ENCODE measurements at regions of chr10 and their contacts with region 1.

Region 1: DNA sequence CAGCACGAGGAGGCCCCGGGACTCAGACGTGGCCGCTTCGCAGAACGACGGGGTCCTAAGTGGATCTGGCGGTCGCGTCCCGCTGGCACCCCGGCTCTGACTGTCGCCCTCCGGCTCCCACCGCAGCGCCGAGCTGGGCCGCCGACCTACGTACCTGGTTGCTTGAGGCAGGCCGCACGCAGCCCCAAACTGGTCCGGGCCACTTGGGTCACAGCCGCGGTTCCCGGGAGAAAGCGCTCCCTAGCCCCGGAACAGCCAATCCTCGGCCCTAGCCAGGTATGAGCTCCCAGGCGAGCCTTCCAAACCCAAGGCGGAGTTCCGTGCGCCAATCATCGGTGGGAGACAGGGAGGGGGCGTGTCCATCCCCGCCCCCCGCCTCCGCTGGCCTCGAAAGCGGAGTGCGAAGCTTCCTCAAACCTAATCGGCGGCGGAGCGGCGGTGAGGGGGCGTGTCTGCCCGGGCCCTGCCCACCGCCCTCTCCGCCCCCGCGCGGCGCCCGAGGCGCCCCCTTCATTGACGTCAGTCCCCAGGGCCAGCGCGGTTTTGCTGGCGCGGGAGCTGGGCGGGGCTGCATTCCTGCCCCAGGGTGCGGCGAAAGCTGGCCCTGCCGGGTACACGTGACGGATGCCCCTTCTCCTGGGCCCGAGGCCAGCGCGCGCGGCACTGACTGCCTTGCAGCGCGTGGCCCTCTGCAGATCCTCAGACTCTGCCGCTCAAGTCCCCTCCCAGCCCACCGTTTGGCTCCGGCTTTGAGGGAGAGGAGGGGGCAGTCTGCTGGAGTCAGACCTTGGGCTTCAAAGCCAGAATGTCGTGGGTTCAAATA is at the start of gene AVPI1:
- DNase-seq: peak; percentile 98
- H3K4me3 Mint-ChIP-seq: peak within 1 kb of the TSS; percentile 82
- H3K27ac Mint-ChIP-seq: peak within 1 kb of the TSS; percentile 72
- H3K4me1 Mint-ChIP-seq: peaks cover 14% of the 10 kb centered on the region
- H3K27me3 Mint-ChIP-seq: peaks cover 4% of the 10 kb centered on the region
- total RNA-seq, gene AVPI1: 1.1 and 1.3 TPM in 2 replicates

Region 2: DNA sequence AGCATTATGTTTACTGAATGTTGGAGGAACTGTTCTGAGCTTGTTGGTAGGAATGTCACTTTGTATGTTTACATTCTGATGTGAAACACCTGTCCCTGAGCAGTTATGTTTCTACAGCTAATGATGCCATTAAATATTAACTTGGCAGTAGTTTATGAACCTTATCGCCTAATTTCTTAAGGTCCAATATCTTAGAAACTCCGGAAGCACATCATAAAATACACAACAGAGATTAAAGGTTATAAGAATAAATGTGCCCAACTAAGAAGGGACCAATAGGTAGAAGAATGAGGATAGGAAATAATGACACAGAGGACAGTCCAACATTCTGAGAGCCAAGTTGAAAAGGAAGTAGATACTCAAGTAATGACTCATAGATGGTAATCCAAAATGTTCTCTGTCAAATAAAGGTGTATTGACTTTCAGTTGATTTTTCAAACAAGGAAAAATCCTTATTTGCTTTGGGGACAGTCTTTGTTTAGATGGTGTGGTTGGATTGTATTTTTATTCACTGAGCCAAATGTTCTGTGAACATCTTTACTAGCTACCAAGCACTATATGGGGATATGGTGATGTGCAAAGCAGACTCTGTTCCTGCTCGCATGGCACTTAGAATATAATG is 823.1 kb before region 1 on chr10:
- intact Hi-C with region 1: no loop called
- DNase-seq: no peak
- H3K4me3 Mint-ChIP-seq: no peak overlapping the region
- H3K27ac Mint-ChIP-seq: peak overlapping the region; percentile 76
- H3K4me1 Mint-ChIP-seq: peaks cover 14% of the 10 kb centered on the region
- H3K27me3 Mint-ChIP-seq: no peaks in the 10 kb centered on the region

Region 3: GRCh38 chr10:97640174-97640867 is 46.9 kb before region 1 on chr10 and contains the start of gene PI4K2A:
- intact Hi-C with region 1: loop called (anchors 2 kb)
- DNase-seq: peak; percentile 100
- H3K4me3 Mint-ChIP-seq: peak within 1 kb of the TSS; percentile 95
- H3K27ac Mint-ChIP-seq: peak within 1 kb of the TSS; percentile 90
- H3K4me1 Mint-ChIP-seq: peaks cover 23% of the 10 kb centered on the region
- H3K27me3 Mint-ChIP-seq: peaks cover 3% of the 10 kb centered on the region
- total RNA-seq, gene PI4K2A: 17.8 TPM in 2 replicates

Region 4: DNA sequence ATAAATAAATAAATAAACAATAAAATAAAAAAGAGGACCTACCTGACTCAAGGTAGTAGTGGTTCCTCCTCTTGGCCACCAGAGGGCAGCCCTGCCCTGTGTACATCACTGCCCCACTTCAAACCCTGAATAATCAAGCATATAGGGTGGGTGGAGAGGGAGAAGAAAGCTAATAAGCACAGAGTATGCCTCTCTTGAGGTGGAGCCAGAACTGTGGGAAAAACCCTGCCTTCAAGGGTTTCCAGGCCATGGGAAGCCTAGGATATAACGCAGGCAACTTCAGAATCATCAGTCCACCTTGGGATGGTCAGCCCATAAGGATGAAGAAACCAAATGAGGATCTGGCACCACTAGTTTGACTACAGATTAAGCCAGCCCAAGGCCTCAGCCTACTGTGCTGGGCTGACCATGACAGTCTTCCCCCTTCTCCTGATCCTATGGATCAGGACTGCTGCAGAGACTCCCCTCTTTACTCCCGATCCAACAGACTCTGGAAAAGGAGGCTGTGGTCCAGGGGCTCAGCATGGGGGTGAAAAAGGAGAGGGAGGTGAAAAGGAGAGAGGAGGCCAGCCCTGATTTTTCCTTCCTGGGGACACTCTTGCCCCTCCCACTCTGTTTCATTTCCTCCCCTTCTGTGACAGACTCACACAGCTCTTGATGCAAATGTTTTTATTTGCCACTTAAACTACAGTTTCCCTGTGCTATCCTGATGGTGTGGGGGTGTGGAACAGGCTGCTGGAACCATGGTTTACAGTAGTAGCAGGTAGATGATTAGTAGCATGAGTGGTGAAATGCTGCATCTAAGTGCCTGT is 10.2 kb before region 1 on chr10:
- intact Hi-C with region 1: loop called (anchors 1 kb)
- DNase-seq: peak; percentile 79
- H3K4me3 Mint-ChIP-seq: no peak overlapping the region
- H3K27ac Mint-ChIP-seq: no peak overlapping the region
- H3K4me1 Mint-ChIP-seq: peaks cover 8% of the 10 kb centered on the region
- H3K27me3 Mint-ChIP-seq: no peaks in the 10 kb centered on the region

Region 5: DNA sequence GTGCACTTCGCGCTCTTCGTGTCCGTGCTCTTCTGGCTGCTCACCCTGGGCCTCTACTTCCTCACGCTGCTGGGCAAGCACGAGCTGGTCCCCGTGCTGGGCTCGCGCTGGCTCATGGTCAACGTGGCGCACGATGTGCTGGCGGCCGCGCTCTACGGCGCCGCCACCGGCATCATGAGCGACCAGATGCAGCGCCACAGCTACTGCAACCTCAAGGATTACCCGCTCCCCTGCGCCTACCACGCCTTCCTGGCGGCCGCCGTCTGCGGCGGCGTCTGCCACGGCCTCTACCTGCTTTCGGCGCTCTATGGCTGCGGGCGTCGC is 26.8 kb after region 1 on chr10:
- intact Hi-C with region 1: loop called (anchors 1 kb)
- DNase-seq: peak; percentile 87
- H3K4me3 Mint-ChIP-seq: peak overlapping the region; percentile 97
- H3K27ac Mint-ChIP-seq: peak overlapping the region; percentile 97
- H3K4me1 Mint-ChIP-seq: peaks cover 10% of the 10 kb centered on the region
- H3K27me3 Mint-ChIP-seq: peaks cover 26% of the 10 kb centered on the region

Region 6: GRCh38 chr10:97736902-97737769 is 50.0 kb after region 1 on chr10 and contains the start of gene ZFYVE27:
- intact Hi-C with region 1: loop called (anchors 1 kb)
- DNase-seq: peak; percentile 99
- H3K4me3 Mint-ChIP-seq: peak within 1 kb of the TSS; percentile 96
- H3K27ac Mint-ChIP-seq: peak within 1 kb of the TSS; percentile 94
- H3K4me1 Mint-ChIP-seq: peaks cover 38% of the 10 kb centered on the region
- H3K27me3 Mint-ChIP-seq: peaks cover 5% of the 10 kb centered on the region
- total RNA-seq, gene ZFYVE27: 38.1 and 42.2 TPM in 2 replicates